Activated B cell treated with CpG ODN at 0.5 μM for 24 hours (primary cell): ENCODE measurements at regions of chr1 and their contacts with region 1.

Region 1: GRCh38 chr1:203765029-203765837 is at the start of gene LAX1:
- DNase-seq: peak; percentile 22
- ATAC-seq: peak; percentile 84
- H3K4me3 Mint-ChIP-seq: peak within 1 kb of the TSS; percentile 91
- H3K27ac Mint-ChIP-seq: peak within 1 kb of the TSS; percentile 99
- H3K4me1 Mint-ChIP-seq: peaks cover 37% of the 10 kb centered on the region
- H3K27me3 Mint-ChIP-seq: no peaks in the 10 kb centered on the region
- CTCF ChIP-seq: no peak
- total RNA-seq, gene LAX1: 12.0 and 13.5 TPM in 2 replicates

Region 2: GRCh38 chr1:203744075-203744972 is 20.9 kb before region 1 on chr1:
- CTCF ChIA-PET with region 1: interaction called, 3 read pairs
- POLR2A ChIA-PET with region 1: interaction called, 32 read pairs
- intact Hi-C with region 1: loop called (anchors 2 kb)
- DNase-seq: no peak
- ATAC-seq: peak; percentile 58
- H3K4me3 Mint-ChIP-seq: peak overlapping the region; percentile 36
- H3K27ac Mint-ChIP-seq: peak overlapping the region; percentile 85
- H3K4me1 Mint-ChIP-seq: peaks cover 26% of the 10 kb centered on the region
- H3K27me3 Mint-ChIP-seq: no peaks in the 10 kb centered on the region
- CTCF ChIP-seq: no peak

Region 3: DNA sequence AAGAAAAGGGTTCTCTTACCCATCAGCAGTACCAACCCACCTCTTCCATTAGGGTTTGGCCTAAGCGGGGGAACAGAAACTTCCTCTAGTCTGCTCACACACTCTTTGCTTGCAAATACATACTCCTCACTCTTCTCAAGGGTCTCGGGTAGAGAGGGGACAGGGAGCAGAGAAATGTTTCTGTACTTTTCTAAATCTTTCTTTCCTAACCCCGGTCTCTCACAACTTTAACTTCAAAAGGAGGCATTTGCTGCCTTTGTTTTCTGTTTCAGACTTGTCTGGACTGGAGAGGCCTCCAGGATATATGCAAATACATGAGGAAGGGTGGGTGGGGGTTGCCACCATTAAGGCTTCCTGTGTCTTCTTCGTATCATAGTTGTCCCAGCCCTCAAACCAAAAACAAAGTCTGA is 10.8 kb before region 1 on chr1:
- CTCF ChIA-PET with region 1: interaction called, 8 read pairs
- POLR2A ChIA-PET with region 1: interaction called, 30 read pairs
- intact Hi-C with region 1: loop called (anchors 1 kb)
- DNase-seq: no peak
- ATAC-seq: peak; percentile 70
- H3K4me3 Mint-ChIP-seq: peak overlapping the region; percentile 60
- H3K27ac Mint-ChIP-seq: peak overlapping the region; percentile 96
- H3K4me1 Mint-ChIP-seq: peaks cover 41% of the 10 kb centered on the region
- H3K27me3 Mint-ChIP-seq: no peaks in the 10 kb centered on the region
- CTCF ChIP-seq: no peak